ENCODE measurements at regions of chr9 and their contacts with region 1.

Region 1: DNA sequence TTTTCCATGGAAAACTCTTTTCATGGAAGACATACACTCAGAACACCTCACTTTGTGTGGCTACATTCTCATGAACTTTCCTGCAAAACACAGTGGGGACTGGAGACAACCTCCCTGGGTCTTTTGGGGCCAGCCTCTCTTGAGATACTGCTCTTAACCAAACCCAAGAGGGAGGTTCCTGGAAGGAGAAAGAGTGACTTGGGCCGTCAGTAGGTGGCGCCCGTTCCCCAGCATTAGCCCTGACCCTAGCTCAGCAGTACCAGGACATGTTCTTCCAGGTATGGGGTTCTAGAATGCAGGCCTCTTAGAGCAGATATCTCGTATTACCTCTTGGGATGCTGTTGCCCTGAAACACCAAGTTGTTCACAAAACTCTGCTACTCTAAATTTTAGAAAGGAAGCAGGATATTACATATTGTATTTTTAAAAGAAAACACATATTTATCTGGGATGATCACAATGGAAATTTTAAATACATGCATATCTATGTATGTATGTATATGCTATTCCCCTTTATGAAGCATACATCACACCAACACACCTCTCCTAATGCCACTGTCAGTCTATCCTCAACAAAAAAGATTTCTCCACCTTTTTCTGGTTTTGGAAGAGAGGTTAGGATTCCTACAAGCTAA is 15.8 kb upstream of the GLIS3 start:
- DNase-seq: peak; percentile 36
- ATAC-seq: peak; percentile 54
- H3K4me3 Mint-ChIP-seq: no peak overlapping the region
- H3K27ac Mint-ChIP-seq: no peak overlapping the region
- H3K4me1 Mint-ChIP-seq: no peaks in the 10 kb centered on the region
- H3K27me3 Mint-ChIP-seq: peaks cover 8% of the 10 kb centered on the region
- CTCF ChIP-seq: peak; percentile 47

Region 2: DNA sequence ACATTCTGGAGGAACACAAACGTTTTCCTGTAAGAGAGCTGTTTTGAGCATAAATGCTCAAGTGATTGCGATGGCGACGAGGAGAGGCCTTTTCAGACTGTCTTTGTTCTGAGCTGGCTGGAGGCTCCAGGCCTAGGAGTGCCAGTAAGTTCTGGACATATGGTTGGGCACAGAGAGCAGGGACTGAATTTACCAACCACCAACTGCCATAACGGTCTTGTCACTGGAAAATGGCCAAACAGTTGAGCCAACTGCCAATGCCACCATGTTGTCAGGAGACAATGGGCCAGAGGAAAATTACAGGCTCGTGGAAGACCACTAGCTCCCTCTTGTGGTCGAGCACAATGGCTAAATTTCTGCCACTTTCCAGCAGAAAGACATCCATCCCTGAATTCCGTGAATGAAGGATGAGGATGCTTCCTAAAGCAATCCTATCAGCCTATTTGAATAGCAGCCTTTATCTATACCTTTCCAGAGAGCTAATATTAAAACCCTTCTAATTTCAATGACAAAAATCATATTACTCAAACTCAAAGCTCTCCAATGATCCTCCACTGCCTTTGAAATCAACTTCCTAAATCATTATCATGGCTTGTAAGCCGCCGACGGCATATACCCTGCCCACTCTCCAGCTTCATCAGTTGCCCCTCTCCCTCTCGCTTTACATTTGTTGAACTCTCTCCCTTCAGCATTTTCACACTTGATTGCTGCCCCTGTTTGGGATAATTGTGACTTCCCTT is 51.1 kb after region 1 on chr9:
- CTCF ChIA-PET with region 1: interaction called, 6 read pairs
- POLR2A ChIA-PET with region 1: no interaction called
- intact Hi-C with region 1: loop called (anchors 5 kb)
- DNase-seq: no peak
- ATAC-seq: no peak
- H3K4me3 Mint-ChIP-seq: no peak overlapping the region
- H3K27ac Mint-ChIP-seq: no peak overlapping the region
- H3K4me1 Mint-ChIP-seq: no peaks in the 10 kb centered on the region
- H3K27me3 Mint-ChIP-seq: peaks cover 10% of the 10 kb centered on the region
- CTCF ChIP-seq: peak; percentile 31

Region 3: DNA sequence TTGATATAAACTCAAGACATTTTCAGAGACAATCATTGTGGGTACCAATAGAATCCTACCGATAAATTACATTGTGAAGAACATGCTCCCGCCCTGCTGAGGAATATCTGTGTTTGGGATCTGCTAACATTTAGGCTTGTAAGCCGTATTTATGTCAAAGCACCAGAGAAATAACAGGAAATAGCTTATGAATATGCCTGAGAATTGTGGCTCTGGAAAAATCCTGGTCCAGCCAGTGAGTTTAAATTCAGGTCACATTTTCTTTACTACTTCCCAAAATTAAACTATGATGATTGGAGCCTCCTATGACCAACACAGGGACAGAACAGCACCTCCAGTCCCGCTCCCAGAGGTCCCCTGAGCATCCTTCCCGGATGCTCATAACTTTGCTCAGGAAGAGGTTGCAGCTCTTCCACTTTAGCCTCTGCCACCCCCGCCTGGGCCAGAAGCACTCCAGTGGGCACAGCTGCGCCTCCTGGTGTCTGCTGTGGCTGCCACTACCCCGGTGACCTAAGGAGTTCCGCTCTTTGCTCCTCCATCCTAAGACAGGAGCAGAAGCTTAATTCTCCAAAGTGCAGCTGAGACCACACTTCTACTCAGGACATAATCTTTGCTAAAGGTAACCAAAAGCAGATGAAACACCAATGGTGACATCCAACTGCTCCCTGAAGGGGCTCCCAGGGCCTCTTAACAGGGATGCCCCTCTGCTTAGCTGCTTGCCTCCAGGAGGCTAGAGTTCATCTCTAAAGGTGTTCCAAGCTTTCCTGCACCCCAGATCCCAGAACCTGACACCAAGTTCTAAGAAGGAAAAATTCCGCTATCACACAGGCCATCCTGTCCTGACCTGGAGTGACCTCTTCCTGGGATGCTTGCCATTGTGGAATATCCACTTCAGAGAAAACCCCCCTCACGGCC is 233.4 kb after region 1 on chr9:
- CTCF ChIA-PET with region 1: interaction called, 3 read pairs
- POLR2A ChIA-PET with region 1: no interaction called
- intact Hi-C with region 1: loop called (anchors 1 kb)
- DNase-seq: no peak
- ATAC-seq: peak; percentile 25
- H3K4me3 Mint-ChIP-seq: no peak overlapping the region
- H3K27ac Mint-ChIP-seq: no peak overlapping the region
- H3K4me1 Mint-ChIP-seq: no peaks in the 10 kb centered on the region
- H3K27me3 Mint-ChIP-seq: no peaks in the 10 kb centered on the region
- CTCF ChIP-seq: no peak

Region 4: DNA sequence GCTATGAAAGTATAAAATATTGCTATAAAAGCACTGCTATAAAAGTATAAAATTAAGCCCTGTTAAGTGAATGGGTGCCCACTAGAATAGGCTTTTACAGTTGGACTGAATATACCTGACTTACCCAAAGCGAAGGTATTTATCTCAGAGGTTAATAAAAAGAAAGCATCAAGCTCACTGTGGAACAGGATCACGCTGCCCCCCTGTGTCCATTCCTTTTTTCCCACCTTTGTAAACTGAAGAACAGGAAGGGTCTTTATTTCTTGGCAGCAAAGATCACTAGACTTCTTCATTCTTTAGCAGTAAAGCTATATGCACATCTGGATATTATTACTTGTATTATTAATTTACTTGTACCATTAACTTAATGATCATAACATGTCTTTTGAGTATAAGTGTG is 324.3 kb after region 1 on chr9:
- CTCF ChIA-PET with region 1: no interaction called
- POLR2A ChIA-PET with region 1: no interaction called
- intact Hi-C with region 1: loop called (anchors 1 kb)
- DNase-seq: no peak
- ATAC-seq: no peak
- H3K4me3 Mint-ChIP-seq: no peak overlapping the region
- H3K27ac Mint-ChIP-seq: no peak overlapping the region
- H3K4me1 Mint-ChIP-seq: no peaks in the 10 kb centered on the region
- H3K27me3 Mint-ChIP-seq: peaks cover 4% of the 10 kb centered on the region
- CTCF ChIP-seq: no peak